ENCODE measurements at regions of chr17 and their contacts with region 1.

Region 1: DNA sequence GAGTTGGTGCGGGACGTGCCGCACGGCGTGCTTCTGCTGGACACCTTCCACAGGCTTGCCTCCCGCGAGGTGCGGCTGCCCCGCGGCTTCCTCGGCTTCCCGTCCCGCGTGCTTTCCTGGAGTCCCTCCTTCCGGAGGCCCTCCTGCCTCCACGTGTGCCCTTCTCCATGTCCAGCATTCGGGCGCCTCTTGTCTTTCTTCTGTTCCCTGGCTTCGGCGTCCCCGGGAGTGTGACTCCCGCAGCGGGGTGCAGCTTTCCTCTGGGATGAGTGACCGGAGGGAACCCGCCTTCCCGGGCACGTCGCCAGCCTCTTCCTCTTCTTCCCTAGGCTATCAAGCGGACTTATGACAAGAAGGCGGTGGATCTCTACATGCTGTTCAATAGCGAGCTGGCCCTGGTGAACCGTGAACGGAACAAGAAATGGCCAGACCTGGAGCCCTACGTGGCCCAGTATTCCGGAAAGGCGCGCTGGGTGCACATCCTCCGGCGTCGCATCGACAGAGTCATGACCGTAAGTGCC is 23.0 kb downstream of the DNAH2 start:
- DNase-seq: no peak
- H3K4me3 ChIP-seq: peak overlapping the region in 12 of 59 donors; percentile 2 to 47 (median 18)
- H3K27ac ChIP-seq: no peak overlapping the region
- H3K27me3 ChIP-seq: peaks cover 0 to 7% (median 0%) of the 10 kb centered on the region in 45 donors
- CTCF ChIP-seq: no peak

Region 2: DNA sequence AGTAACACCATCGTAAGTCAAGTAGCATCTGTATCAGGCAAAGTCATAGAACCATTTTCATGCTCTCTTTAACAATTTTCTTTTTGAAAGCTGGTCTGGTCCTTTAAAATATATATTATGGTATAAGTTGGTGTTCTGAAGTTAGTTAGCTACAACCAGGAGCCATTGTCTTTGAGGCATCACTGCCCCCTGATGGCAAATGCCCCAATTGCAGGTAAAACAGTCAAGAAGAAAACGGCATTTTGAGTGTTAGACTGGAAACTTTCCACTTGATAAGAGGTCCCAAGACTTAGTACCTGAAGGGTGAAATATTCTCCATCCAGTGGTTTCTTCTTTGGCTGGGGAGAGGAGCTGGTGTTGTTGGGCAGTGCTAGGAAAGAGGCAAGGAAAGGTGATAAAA is 67.3 kb before region 1 on chr17:
- intact Hi-C with region 1: no loop called
- DNase-seq: no peak
- H3K4me3 ChIP-seq: no peak overlapping the region
- H3K27ac ChIP-seq: no peak overlapping the region
- H3K27me3 ChIP-seq: no peaks in the 10 kb centered on the region
- CTCF ChIP-seq: peak in 14 of 56 donors; percentile 7 to 26 (median 16)

Region 3: GRCh38 chr17:7897773-7898172 is 157.2 kb after region 1 on chr17:
- intact Hi-C with region 1: loop called in 1 of 2 experiments (anchors 5 kb)
- DNase-seq: peak in 2 of 10 donors; percentile 26 to 55
- H3K4me3 ChIP-seq: peak overlapping the region in 2 of 59 donors; percentile 2 to 6
- H3K27ac ChIP-seq: peak overlapping the region in 37 of 59 donors; percentile 1 to 67 (median 39)
- H3K27me3 ChIP-seq: no peaks in the 10 kb centered on the region
- CTCF ChIP-seq: peak; percentile 26 to 84 (median 69)

Measured in dorsolateral prefrontal cortex (tissue), 120 donors.